HCT116 (cell line): ENCODE measurements at regions of chr12 and their contacts with region 1.

Region 1: GRCh38 chr12:4874671-4875070 is 35.0 kb upstream of the KCNA1 start:
- DNase-seq: no peak
- ATAC-seq: no peak
- H3K4me3 ChIP-seq: no peak overlapping the region
- H3K27ac ChIP-seq: no peak overlapping the region
- H3K4me1 ChIP-seq: no peaks in the 10 kb centered on the region
- H3K27me3 ChIP-seq: peaks cover 46% of the 10 kb centered on the region
- CTCF ChIP-seq: no peak
- POLR2A ChIP-seq: no peak
- RAD21 ChIP-seq: no peak

Region 2: GRCh38 chr12:4794491-4794890 is 80.2 kb before region 1 on chr12:
- CTCF ChIA-PET with region 1: no interaction called
- POLR2A ChIA-PET with region 1: no interaction called
- RAD21 ChIA-PET with region 1: no interaction called
- intact Hi-C with region 1: no loop called
- DNase-seq: no peak
- ATAC-seq: no peak
- H3K4me3 ChIP-seq: no peak overlapping the region
- H3K27ac ChIP-seq: no peak overlapping the region
- H3K4me1 ChIP-seq: no peaks in the 10 kb centered on the region
- H3K27me3 ChIP-seq: peaks cover 64% of the 10 kb centered on the region
- CTCF ChIP-seq: no peak
- POLR2A ChIP-seq: no peak
- RAD21 ChIP-seq: no peak

Region 3: DNA sequence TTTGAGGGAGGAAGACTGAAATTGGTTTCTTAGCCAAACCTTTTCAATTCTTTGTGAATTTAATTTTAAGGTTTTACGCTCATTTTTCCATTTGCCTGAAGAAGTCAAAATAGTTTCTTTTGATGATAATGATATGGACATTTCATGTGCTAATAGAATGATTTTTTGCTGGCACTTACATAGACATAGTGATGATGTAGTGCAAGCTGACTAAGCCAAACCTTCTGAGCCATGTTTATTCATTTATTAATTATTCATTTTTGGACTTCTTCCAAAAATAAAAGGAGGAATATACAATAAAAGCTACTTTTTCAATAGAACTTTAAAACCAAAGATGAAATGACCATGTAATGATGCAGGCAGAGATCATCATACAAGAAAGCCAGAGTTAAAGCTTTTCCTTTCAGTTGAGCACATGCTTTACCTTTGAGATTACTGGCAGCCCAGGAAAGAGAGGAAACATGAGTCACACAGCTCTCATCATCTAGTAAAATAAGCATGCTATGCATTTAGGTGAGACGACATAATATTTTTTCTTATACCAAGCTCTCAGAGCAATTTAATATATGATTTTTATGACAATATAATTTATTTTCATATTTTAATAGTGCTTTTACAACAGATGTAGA is 59.9 kb after region 1 on chr12:
- CTCF ChIA-PET with region 1: no interaction called
- POLR2A ChIA-PET with region 1: no interaction called
- RAD21 ChIA-PET with region 1: no interaction called
- intact Hi-C with region 1: no loop called
- DNase-seq: no peak
- ATAC-seq: no peak
- H3K4me3 ChIP-seq: no peak overlapping the region
- H3K27ac ChIP-seq: no peak overlapping the region
- H3K4me1 ChIP-seq: no peaks in the 10 kb centered on the region
- H3K27me3 ChIP-seq: peaks cover 81% of the 10 kb centered on the region
- CTCF ChIP-seq: no peak
- POLR2A ChIP-seq: no peak
- RAD21 ChIP-seq: no peak

Region 4: GRCh38 chr12:4991373-4991772 is 116.7 kb after region 1 on chr12:
- CTCF ChIA-PET with region 1: no interaction called
- POLR2A ChIA-PET with region 1: no interaction called
- RAD21 ChIA-PET with region 1: no interaction called
- intact Hi-C with region 1: loop called (anchors 5 kb)
- DNase-seq: no peak
- ATAC-seq: no peak
- H3K4me3 ChIP-seq: no peak overlapping the region
- H3K27ac ChIP-seq: no peak overlapping the region
- H3K4me1 ChIP-seq: no peaks in the 10 kb centered on the region
- H3K27me3 ChIP-seq: peaks cover 98% of the 10 kb centered on the region
- CTCF ChIP-seq: no peak
- POLR2A ChIP-seq: no peak
- RAD21 ChIP-seq: no peak